ENCODE measurements at regions of chr5 and their contacts with region 1.

Region 1: GRCh38 chr5:59810041-59810440 is 83.5 kb downstream of the PDE4D start:
- H3K4me3 Mint-ChIP-seq: peak overlapping the region; percentile 44
- H3K27ac Mint-ChIP-seq: no peak overlapping the region
- H3K4me1 Mint-ChIP-seq: peaks cover 12% of the 10 kb centered on the region
- H3K27me3 Mint-ChIP-seq: no peaks in the 10 kb centered on the region

Region 2: GRCh38 chr5:59562756-59563389 is 247.2 kb before region 1 on chr5:
- intact Hi-C with region 1: no loop called
- H3K4me3 Mint-ChIP-seq: no peak overlapping the region
- H3K27ac Mint-ChIP-seq: no peak overlapping the region
- H3K4me1 Mint-ChIP-seq: peaks cover 11% of the 10 kb centered on the region
- H3K27me3 Mint-ChIP-seq: no peaks in the 10 kb centered on the region

Region 3: GRCh38 chr5:59840200-59840601 is 30.2 kb after region 1 on chr5:
- intact Hi-C with region 1: no loop called
- H3K4me3 Mint-ChIP-seq: no peak overlapping the region
- H3K27ac Mint-ChIP-seq: no peak overlapping the region
- H3K4me1 Mint-ChIP-seq: peaks cover 17% of the 10 kb centered on the region
- H3K27me3 Mint-ChIP-seq: no peaks in the 10 kb centered on the region

Region 4: DNA sequence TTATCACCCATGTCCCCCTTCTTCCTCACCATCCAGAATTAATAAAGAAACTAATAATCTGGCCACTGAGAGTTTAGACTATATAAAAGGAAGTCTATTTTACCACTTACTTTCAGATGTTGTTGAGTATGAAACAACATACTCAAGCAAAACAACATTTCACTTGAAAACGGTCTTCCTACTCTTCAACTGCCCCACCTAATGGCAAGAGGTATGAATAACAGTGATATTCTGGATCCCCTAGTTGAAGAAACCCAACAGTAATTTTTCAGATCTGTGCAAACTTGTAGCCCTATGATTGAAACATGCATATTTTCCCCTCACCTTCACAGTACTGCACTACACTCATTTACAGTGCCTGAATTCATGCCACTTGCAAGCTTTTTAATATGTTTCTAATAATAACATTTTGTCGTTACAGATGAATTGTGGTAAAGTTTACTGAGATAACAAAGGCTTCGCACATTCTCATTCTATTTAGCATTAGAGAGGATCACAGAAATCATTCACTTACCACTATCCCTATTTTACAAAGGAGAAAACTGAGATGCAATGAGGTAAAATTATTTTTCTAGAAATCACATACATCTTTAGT is 351.4 kb after region 1 on chr5:
- intact Hi-C with region 1: loop called (anchors 2 kb)
- H3K4me3 Mint-ChIP-seq: no peak overlapping the region
- H3K27ac Mint-ChIP-seq: no peak overlapping the region
- H3K4me1 Mint-ChIP-seq: peaks cover 10% of the 10 kb centered on the region
- H3K27me3 Mint-ChIP-seq: no peaks in the 10 kb centered on the region

Region 5: GRCh38 chr5:60287174-60287771 is 477.2 kb after region 1 on chr5:
- intact Hi-C with region 1: loop called (anchors 1 kb)
- H3K4me3 Mint-ChIP-seq: no peak overlapping the region
- H3K27ac Mint-ChIP-seq: no peak overlapping the region
- H3K4me1 Mint-ChIP-seq: peaks cover 9% of the 10 kb centered on the region
- H3K27me3 Mint-ChIP-seq: no peaks in the 10 kb centered on the region

Region 6: GRCh38 chr5:60382716-60383115 is 572.7 kb after region 1 on chr5:
- intact Hi-C with region 1: loop called (anchors 1 kb)
- H3K4me3 Mint-ChIP-seq: no peak overlapping the region
- H3K27ac Mint-ChIP-seq: no peak overlapping the region
- H3K4me1 Mint-ChIP-seq: peaks cover 11% of the 10 kb centered on the region
- H3K27me3 Mint-ChIP-seq: peaks cover 3% of the 10 kb centered on the region

Region 7: DNA sequence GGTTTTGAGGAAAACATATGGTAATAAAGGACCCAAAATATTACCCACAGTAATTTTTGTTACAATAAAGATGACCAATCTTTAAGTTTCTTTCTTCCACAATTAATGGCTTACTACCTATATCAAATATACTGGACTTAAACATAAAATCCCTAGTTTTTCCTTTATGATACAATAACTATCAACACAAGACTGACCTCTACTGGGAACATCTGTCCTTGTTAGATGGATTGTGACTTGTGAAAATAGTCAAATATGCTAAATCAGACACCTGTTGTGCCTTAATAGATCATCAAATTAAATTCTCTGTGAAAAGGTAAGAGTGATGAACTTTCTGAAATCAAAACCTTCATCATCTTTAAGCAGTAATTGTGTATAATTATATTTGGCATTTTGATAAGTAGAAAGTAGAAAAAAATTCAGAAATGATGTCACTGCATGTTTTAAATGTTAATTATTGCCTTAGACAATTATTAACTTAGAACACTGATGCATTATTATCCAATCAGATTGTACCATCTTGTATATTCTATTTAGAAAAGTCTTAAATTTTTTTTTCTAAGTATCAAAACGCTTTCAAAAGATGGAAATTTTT is 776.4 kb after region 1 on chr5:
- intact Hi-C with region 1: loop called (anchors 1 kb)
- H3K4me3 Mint-ChIP-seq: no peak overlapping the region
- H3K27ac Mint-ChIP-seq: no peak overlapping the region
- H3K4me1 Mint-ChIP-seq: no peaks in the 10 kb centered on the region
- H3K27me3 Mint-ChIP-seq: no peaks in the 10 kb centered on the region

Region 8: DNA sequence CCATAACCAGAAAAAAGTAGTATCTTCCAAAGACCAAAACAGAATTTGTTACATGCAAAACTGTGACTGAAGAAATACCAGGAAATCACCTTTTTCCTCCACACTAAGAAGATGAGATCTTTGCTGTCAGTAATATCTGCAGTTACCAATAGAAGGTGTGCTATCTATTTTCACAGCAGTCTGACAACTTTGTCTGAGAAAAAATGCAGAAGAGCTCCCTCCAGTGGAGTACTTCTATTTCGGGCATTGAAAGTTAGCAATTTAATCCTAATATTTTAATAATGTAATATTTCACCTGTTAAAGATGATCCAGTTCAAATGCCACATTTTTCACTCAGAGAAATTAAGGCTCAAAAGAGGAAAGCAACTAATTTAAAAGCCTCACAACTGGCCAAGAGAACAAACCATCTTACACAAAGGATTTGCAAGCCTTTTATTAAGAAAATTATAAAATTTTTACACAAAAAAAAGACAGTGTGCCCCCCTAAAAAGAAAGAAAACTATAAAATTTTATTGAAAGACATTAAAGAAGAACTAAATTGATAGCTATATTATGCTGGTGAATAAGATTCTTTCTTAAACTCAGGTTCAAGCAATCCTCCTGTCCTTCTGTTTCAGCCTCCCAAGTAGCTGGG is 839.4 kb after region 1 on chr5:
- intact Hi-C with region 1: loop called (anchors 5 kb)
- H3K4me3 Mint-ChIP-seq: no peak overlapping the region
- H3K27ac Mint-ChIP-seq: no peak overlapping the region
- H3K4me1 Mint-ChIP-seq: peaks cover 9% of the 10 kb centered on the region
- H3K27me3 Mint-ChIP-seq: no peaks in the 10 kb centered on the region

Region 9: DNA sequence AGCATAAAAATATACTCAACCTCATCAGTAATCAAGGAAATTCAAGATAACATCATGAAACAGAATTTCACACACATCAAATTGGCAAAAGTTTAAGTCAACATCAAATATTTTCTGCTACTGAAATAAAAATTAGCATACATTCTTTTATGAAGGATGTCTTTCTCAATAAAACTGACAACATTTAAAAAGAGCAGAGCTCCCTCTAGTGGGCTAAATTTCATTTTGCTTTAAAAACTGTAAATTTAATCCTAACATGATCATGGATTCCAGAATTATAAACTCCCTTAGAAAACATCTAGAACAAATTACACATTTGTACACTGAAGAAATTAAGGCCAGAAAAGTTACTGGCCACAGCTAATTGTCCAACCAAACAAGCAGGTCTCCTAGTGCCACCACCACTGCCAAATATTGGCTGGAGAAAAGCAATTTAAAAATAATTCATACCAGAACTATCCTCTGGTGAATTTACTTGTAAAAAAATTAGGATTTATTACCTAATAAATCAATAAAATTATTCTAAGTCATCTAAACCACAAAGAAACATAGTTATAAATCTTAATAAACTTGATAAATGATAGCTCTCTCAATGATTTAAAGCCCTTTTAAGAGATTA is 858.8 kb after region 1 on chr5:
- intact Hi-C with region 1: loop called (anchors 1 kb)
- H3K4me3 Mint-ChIP-seq: no peak overlapping the region
- H3K27ac Mint-ChIP-seq: no peak overlapping the region
- H3K4me1 Mint-ChIP-seq: peaks cover 17% of the 10 kb centered on the region
- H3K27me3 Mint-ChIP-seq: no peaks in the 10 kb centered on the region

Region 10: GRCh38 chr5:60763061-60763460 is 953.0 kb after region 1 on chr5:
- intact Hi-C with region 1: no loop called
- H3K4me3 Mint-ChIP-seq: no peak overlapping the region
- H3K27ac Mint-ChIP-seq: no peak overlapping the region
- H3K4me1 Mint-ChIP-seq: no peaks in the 10 kb centered on the region
- H3K27me3 Mint-ChIP-seq: no peaks in the 10 kb centered on the region